H1 (cell line): ENCODE measurements at regions of chr5 and their contacts with region 1.

Region 1: DNA sequence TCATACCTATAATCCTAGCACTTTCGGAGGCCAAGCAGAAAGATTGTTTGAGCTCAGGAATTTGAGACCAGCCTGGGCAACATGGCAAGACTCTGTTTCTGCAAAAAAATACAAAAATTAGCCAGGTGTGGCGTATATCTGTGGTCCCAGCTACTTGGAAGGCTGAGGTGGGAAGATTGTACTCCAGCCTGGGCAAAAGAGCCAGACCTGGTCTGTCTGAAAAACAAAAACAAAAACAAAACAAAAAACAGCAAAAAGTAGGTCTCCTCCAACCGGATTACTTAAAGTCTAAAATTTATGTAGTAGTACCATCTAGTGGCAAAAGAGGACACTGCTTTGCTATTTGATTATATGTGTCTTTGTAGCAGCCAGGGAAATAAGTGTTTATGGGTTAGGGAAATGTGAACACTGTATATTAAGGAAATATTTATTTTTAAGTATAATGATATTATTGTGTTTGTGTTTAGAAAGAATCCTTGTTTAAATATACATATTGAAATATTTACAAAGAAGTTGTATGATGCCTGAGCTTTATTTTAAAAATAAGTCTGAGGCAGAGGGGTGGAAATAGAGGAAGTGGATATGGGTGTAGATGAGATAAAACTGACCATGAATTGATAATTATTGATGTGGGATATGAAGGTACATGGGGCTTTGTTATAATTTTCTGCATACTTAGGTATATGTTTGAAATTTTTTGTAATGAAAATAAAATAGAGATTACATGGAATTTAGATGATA is 20.0 kb downstream of the APC start:
- DNase-seq: no peak
- H3K4me3 ChIP-seq: no peak overlapping the region
- H3K27ac ChIP-seq: no peak overlapping the region
- H3K4me1 ChIP-seq: no peaks in the 10 kb centered on the region
- H3K27me3 ChIP-seq: no peaks in the 10 kb centered on the region
- CTCF ChIP-seq: peak in 2 of 3 experiments; percentile 48 to 63; a peak in 2 of 4 replicates
- EP300 ChIP-seq: no peak
- POLR2A ChIP-seq: no peak
- RAD21 ChIP-seq: peak; percentile 81 to 83

Region 2: GRCh38 chr5:111853748-111854147 is 903.9 kb before region 1 on chr5:
- CTCF ChIA-PET with region 1: no interaction called
- POLR2A ChIA-PET with region 1: no interaction called
- DNase-seq: no peak
- H3K4me3 ChIP-seq: no peak overlapping the region
- H3K27ac ChIP-seq: no peak overlapping the region
- H3K4me1 ChIP-seq: peaks cover 0 to 2% (median 0%) of the 10 kb centered on the region in 4 experiments; a peak in 1 of 7 replicates
- H3K27me3 ChIP-seq: no peaks in the 10 kb centered on the region
- CTCF ChIP-seq: no peak
- EP300 ChIP-seq: no peak
- POLR2A ChIP-seq: no peak
- RAD21 ChIP-seq: no peak

Region 3: GRCh38 chr5:112551419-112552032 is 206.1 kb before region 1 on chr5:
- CTCF ChIA-PET with region 1: interaction called, 126 read pairs
- POLR2A ChIA-PET with region 1: no interaction called
- DNase-seq: no peak
- H3K4me3 ChIP-seq: no peak overlapping the region
- H3K27ac ChIP-seq: no peak overlapping the region
- H3K4me1 ChIP-seq: no peaks in the 10 kb centered on the region
- H3K27me3 ChIP-seq: no peaks in the 10 kb centered on the region
- CTCF ChIP-seq: peak in 2 of 3 experiments; percentile 61 to 63; a peak in 2 of 4 replicates
- EP300 ChIP-seq: no peak
- POLR2A ChIP-seq: no peak
- RAD21 ChIP-seq: peak; percentile 86 to 87

Region 4: GRCh38 chr5:112660359-112660758 is 97.3 kb before region 1 on chr5:
- CTCF ChIA-PET with region 1: no interaction called
- POLR2A ChIA-PET with region 1: no interaction called
- DNase-seq: no peak
- H3K4me3 ChIP-seq: no peak overlapping the region
- H3K27ac ChIP-seq: no peak overlapping the region
- H3K4me1 ChIP-seq: no peaks in the 10 kb centered on the region
- H3K27me3 ChIP-seq: no peaks in the 10 kb centered on the region
- CTCF ChIP-seq: no peak
- EP300 ChIP-seq: no peak
- POLR2A ChIP-seq: no peak
- RAD21 ChIP-seq: no peak

Region 5: DNA sequence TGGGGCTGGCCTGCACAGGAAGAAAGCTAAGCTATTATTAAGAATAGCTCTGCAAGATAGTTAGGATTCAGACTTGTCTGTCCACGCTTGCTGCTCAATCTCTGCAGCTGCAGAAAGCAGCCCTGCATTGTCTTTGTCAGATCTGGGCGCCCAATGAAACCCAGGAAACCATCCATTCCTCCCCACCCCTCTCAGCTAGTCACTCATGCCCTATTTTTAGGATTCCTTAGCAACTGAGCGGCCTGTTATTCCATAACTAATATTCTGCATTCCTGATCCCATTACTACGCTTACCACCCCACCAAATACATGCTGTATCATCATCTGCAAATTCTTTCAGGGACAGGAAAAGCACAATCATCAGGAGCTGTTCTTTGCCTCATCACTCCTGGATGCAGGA is 72.9 kb before region 1 on chr5:
- CTCF ChIA-PET with region 1: interaction called, 111 read pairs
- POLR2A ChIA-PET with region 1: no interaction called
- DNase-seq: no peak
- H3K4me3 ChIP-seq: no peak overlapping the region
- H3K27ac ChIP-seq: no peak overlapping the region
- H3K4me1 ChIP-seq: no peaks in the 10 kb centered on the region; a peak in 1 of 7 replicates
- H3K27me3 ChIP-seq: peaks cover 0 to 1% (median 0%) of the 10 kb centered on the region in 4 experiments; a peak in 2 of 7 replicates
- CTCF ChIP-seq: no peak
- EP300 ChIP-seq: no peak
- POLR2A ChIP-seq: no peak
- RAD21 ChIP-seq: no peak

Region 6: GRCh38 chr5:112707187-112708102 is 50.2 kb before region 1 on chr5:
- CTCF ChIA-PET with region 1: interaction called, 12 read pairs
- POLR2A ChIA-PET with region 1: no interaction called
- DNase-seq: peak; percentile 92 to 97
- H3K4me3 ChIP-seq: peak overlapping the region; percentile 81 to 90 (median 84)
- H3K27ac ChIP-seq: peak overlapping the region; percentile 88
- H3K4me1 ChIP-seq: peaks cover 0 to 3% (median 0%) of the 10 kb centered on the region in 4 experiments; a peak in 2 of 7 replicates
- H3K27me3 ChIP-seq: no peaks in the 10 kb centered on the region
- CTCF ChIP-seq: no peak
- EP300 ChIP-seq: no peak
- POLR2A ChIP-seq: peak; percentile 88 to 99
- RAD21 ChIP-seq: no peak

Region 7: DNA sequence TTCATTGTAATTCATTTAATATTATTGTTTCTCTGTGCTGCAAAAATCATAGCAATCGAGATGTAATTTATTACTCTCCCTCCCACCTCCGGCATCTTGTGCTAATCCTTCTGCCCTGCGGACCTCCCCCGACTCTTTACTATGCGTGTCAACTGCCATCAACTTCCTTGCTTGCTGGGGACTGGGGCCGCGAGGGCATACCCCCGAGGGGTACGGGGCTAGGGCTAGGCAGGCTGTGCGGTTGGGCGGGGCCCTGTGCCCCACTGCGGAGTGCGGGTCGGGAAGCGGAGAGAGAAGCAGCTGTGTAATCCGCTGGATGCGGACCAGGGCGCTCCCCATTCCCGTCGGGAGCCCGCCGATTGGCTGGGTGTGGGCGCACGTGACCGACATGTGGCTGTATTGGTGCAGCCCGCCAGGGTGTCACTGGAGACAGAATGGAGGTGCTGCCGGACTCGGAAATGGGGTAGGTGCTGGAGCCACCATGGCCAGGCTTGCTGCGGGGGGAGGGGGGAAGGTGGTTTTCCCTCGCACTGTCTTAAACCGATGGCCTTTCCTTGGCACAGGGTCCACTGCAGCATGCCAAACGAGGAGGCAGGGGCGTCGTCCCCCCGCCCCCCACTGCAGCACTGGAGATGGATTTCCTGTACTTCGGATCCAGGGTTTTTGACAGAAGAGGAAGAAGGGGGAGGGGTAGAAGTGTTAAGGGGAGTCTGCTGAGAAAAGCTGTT is 20.0 kb before region 1 on chr5 and contains the start of gene APC:
- CTCF ChIA-PET with region 1: interaction called, 12 read pairs
- POLR2A ChIA-PET with region 1: no interaction called
- DNase-seq: peak; percentile 63 to 94
- H3K4me3 ChIP-seq: peak within 1 kb of the TSS; percentile 51 to 94 (median 76)
- H3K27ac ChIP-seq: peak within 1 kb of the TSS; percentile 78
- H3K4me1 ChIP-seq: peaks cover 2 to 8% (median 2%) of the 10 kb centered on the region in 4 experiments; a peak in 4 of 7 replicates
- H3K27me3 ChIP-seq: no peaks in the 10 kb centered on the region
- CTCF ChIP-seq: no peak
- EP300 ChIP-seq: no peak
- POLR2A ChIP-seq: no peak
- RAD21 ChIP-seq: no peak
- total RNA-seq, gene APC: 41.9 and 44.0 TPM in 2 replicates

Region 8: GRCh38 chr5:112902561-112902960 is 144.9 kb after region 1 on chr5:
- CTCF ChIA-PET with region 1: no interaction called
- POLR2A ChIA-PET with region 1: no interaction called
- DNase-seq: no peak
- H3K4me3 ChIP-seq: no peak overlapping the region
- H3K27ac ChIP-seq: no peak overlapping the region
- H3K4me1 ChIP-seq: no peaks in the 10 kb centered on the region
- H3K27me3 ChIP-seq: no peaks in the 10 kb centered on the region
- CTCF ChIP-seq: no peak
- EP300 ChIP-seq: no peak
- POLR2A ChIP-seq: no peak
- RAD21 ChIP-seq: no peak